ENCODE measurements at regions of chr11 and their contacts with region 1.

Region 1: DNA sequence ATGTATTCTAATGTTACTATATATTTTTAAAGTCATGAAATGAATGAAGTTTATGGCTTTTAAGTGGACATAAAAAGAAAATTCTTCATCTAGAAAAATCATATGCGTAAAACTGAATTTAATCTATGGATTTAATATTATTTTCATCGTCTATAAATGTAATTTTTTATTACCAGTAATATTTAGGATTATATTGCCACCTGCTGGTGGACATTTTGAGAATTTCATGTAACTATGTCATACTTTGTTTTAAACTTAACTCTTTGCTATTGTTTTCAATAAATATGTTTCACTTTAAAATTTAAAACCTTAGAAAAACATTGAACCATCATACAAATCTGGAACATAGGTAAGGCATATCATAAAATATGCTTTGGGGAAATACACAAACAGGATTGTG is 66.5 kb upstream of the CEP126 start:
- H3K4me3 ChIP-seq: no peak overlapping the region
- H3K27ac ChIP-seq: no peak overlapping the region
- H3K4me1 ChIP-seq: no peaks in the 10 kb centered on the region
- CTCF ChIP-seq: no peak

Region 2: DNA sequence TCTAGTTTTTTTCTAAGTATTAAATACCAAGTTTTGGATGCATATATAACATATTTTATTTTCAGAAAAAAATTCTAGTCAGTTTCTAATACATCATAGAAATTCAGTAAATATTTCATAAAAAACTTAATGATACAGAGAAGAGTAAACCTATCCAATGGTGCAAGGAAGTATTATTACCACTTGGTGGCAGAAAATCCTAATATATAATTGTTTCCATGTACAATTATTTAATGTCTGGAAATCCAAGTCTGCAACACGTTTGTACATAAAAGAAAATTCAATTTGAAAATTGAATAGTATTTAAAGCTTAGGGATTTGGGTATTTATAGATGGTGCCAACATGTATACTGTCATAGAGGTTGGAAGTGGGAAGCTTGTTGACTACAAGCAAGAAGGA is 391.4 kb before region 1 on chr11:
- CTCF ChIA-PET with region 1: interaction called, 30 read pairs
- POLR2A ChIA-PET with region 1: no interaction called
- H3K4me3 ChIP-seq: no peak overlapping the region
- H3K27ac ChIP-seq: no peak overlapping the region
- H3K4me1 ChIP-seq: no peaks in the 10 kb centered on the region
- CTCF ChIP-seq: no peak

Region 3: DNA sequence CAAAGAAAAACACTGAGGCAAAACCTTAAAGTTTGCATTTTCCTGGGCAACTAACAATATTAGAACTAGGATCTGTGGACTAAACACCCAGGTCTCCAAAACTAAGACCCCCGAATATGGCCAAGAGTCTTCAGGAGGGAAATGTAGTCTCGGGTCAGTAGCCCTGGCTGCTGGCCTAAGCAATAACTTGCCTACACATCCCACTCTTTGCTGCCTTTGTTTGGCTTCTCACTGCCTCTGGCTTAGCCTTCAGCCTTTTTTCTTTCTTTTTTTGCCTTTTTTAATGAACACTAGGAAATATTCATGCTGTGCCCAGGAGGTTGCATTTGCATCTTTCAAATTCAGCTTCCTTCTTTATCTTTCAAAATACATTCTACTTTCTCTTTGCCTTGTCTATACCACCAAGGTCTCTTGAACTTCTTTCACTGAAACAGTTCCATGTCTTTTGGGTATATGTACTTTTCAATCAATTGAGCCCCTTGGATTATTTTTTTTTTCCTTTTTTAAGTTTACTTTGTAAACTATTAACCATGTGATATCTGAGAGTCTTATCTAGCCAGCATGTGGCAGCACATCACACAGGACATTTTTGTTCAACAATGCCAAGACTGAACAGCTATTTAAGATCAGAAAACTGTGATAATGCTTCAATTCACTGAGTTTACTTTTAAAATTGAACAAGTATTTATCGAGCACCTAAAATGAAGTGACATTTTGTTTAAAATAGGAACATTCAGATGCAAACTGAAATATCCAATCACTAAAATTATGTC is 99.5 kb before region 1 on chr11:
- CTCF ChIA-PET with region 1: no interaction called
- POLR2A ChIA-PET with region 1: no interaction called
- H3K4me3 ChIP-seq: no peak overlapping the region
- H3K27ac ChIP-seq: no peak overlapping the region
- H3K4me1 ChIP-seq: no peaks in the 10 kb centered on the region
- CTCF ChIP-seq: no peak

Region 4: DNA sequence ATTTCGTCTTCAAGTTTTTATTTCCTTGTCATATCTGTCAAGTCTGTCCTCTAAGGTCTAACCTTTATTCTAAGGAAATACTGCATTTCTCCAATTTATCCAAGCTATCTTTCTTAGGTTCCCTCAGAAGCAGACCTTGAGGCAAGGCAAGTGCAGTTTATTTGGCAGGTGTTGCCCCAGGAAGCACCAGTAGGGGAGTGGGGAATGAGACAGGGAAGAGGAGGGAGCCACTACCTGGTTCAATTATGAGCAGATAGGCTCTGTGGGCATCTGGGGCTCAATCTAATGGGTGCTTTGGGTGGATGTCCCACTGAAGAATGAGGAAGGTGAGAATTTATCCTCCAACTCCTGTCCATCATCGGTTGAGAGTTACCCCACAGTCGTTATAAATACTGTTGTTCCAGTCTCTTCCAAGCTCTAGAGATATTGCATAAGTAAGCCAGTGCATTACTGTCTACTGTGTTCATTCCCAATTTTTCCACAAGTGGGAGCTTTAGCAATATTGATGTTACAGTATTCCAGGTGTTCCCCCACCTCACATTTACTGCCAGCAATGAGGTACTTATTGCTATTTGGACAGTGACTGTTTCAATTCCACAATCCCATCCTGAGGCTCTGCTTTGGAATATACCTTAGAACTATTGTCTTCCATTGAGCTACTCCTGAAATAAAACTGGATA is 88.4 kb before region 1 on chr11:
- CTCF ChIA-PET with region 1: interaction called, 13 read pairs
- POLR2A ChIA-PET with region 1: no interaction called
- H3K4me3 ChIP-seq: no peak overlapping the region
- H3K27ac ChIP-seq: no peak overlapping the region
- H3K4me1 ChIP-seq: no peaks in the 10 kb centered on the region
- CTCF ChIP-seq: no peak

Region 5: GRCh38 chr11:101860696-101861427 is 12.6 kb after region 1 on chr11:
- CTCF ChIA-PET with region 1: interaction called, 18 read pairs
- POLR2A ChIA-PET with region 1: no interaction called
- H3K4me3 ChIP-seq: no peak overlapping the region
- H3K27ac ChIP-seq: no peak overlapping the region
- H3K4me1 ChIP-seq: no peaks in the 10 kb centered on the region
- CTCF ChIP-seq: no peak

Region 6: GRCh38 chr11:102171101-102171500 is 322.8 kb after region 1 on chr11:
- CTCF ChIA-PET with region 1: no interaction called
- POLR2A ChIA-PET with region 1: no interaction called
- H3K4me3 ChIP-seq: no peak overlapping the region
- H3K27ac ChIP-seq: no peak overlapping the region
- H3K4me1 ChIP-seq: no peaks in the 10 kb centered on the region
- CTCF ChIP-seq: no peak